B cell (primary cell): ENCODE measurements at regions of chr2 and their contacts with region 1.

Region 1: GRCh38 chr2:196076778-196077568 is 8.3 kb upstream of the DNAH7 start:
- DNase-seq: no peak
- ATAC-seq: no peak
- H3K4me3 ChIP-seq: no peak overlapping the region
- H3K4me3 Mint-ChIP-seq: no peak overlapping the region
- H3K27ac ChIP-seq: no peak overlapping the region
- H3K27ac Mint-ChIP-seq: no peak overlapping the region
- H3K4me1 ChIP-seq: peaks cover 13 to 17% of the 10 kb centered on the region in 2 donors
- H3K4me1 Mint-ChIP-seq: peaks cover 21% of the 10 kb centered on the region
- H3K27me3 ChIP-seq: no peaks in the 10 kb centered on the region
- H3K27me3 Mint-ChIP-seq: no peaks in the 10 kb centered on the region
- CTCF ChIP-seq: no peak

Region 2: GRCh38 chr2:196101325-196101991 is 24.5 kb after region 1 on chr2:
- CTCF ChIA-PET with region 1: interaction called, 19 read pairs
- POLR2A ChIA-PET with region 1: no interaction called
- intact Hi-C with region 1: no loop called
- DNase-seq: peak; percentile 67
- ATAC-seq: peak; percentile 86
- H3K4me3 ChIP-seq: no peak overlapping the region
- H3K4me3 Mint-ChIP-seq: peak overlapping the region; percentile 64
- H3K27ac ChIP-seq: peak overlapping the region; percentile 49 to 66
- H3K27ac Mint-ChIP-seq: peak overlapping the region; percentile 79
- H3K4me1 ChIP-seq: peaks cover 48 to 49% of the 10 kb centered on the region in 2 donors
- H3K4me1 Mint-ChIP-seq: peaks cover 68% of the 10 kb centered on the region
- H3K27me3 ChIP-seq: no peaks in the 10 kb centered on the region
- H3K27me3 Mint-ChIP-seq: no peaks in the 10 kb centered on the region
- CTCF ChIP-seq: no peak

Region 3: GRCh38 chr2:196143730-196144131 is 66.8 kb after region 1 on chr2:
- CTCF ChIA-PET with region 1: interaction called, 12 read pairs
- POLR2A ChIA-PET with region 1: no interaction called
- intact Hi-C with region 1: no loop called
- DNase-seq: no peak
- ATAC-seq: no peak
- H3K4me3 ChIP-seq: no peak overlapping the region
- H3K4me3 Mint-ChIP-seq: no peak overlapping the region
- H3K27ac ChIP-seq: peak overlapping the region in 1 of 2 donors; percentile 58
- H3K27ac Mint-ChIP-seq: peak overlapping the region; percentile 57
- H3K4me1 ChIP-seq: peaks cover 20 to 28% of the 10 kb centered on the region in 2 donors
- H3K4me1 Mint-ChIP-seq: peaks cover 39% of the 10 kb centered on the region
- H3K27me3 ChIP-seq: no peaks in the 10 kb centered on the region
- H3K27me3 Mint-ChIP-seq: no peaks in the 10 kb centered on the region
- CTCF ChIP-seq: no peak

Region 4: GRCh38 chr2:196171248-196171871 is 94.4 kb after region 1 on chr2 and contains the start of gene STK17B:
- CTCF ChIA-PET with region 1: interaction called, 27 read pairs
- POLR2A ChIA-PET with region 1: interaction called, 4 read pairs
- intact Hi-C with region 1: loop called (anchors 2 kb)
- DNase-seq: peak; percentile 98
- ATAC-seq: peak; percentile 66
- H3K4me3 ChIP-seq: peak within 1 kb of the TSS; percentile 94 to 100 (median 98)
- H3K4me3 Mint-ChIP-seq: peak within 1 kb of the TSS; percentile 100
- H3K27ac ChIP-seq: peak within 1 kb of the TSS; percentile 93 to 99
- H3K27ac Mint-ChIP-seq: peak within 1 kb of the TSS; percentile 99
- H3K4me1 ChIP-seq: peaks cover 50 to 51% of the 10 kb centered on the region in 2 donors
- H3K4me1 Mint-ChIP-seq: peaks cover 56% of the 10 kb centered on the region
- H3K27me3 ChIP-seq: no peaks in the 10 kb centered on the region
- H3K27me3 Mint-ChIP-seq: no peaks in the 10 kb centered on the region
- CTCF ChIP-seq: no peak
- total RNA-seq, gene STK17B: 249 and 261 TPM in 2 replicates

Region 5: DNA sequence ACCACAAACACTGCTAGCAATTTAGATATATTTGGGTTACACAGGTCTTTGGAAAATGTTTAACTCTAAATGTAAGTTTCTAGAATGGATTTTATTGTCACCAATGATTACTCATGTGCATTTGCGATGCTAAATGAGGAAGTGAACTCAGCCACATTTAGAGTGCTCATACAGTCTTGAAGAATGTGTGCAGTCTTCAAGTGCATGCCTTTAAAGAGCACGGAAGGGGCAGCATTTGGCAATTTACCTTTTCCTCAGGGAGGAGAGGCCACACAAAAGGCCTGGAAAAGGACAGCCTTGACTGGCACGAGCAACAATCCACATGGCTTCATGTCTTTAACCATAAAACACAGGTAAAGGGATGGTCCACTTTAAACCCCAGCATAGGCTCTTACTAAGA is 172.9 kb after region 1 on chr2:
- CTCF ChIA-PET with region 1: interaction called, 13 read pairs
- POLR2A ChIA-PET with region 1: no interaction called
- intact Hi-C with region 1: no loop called
- DNase-seq: peak; percentile 68
- ATAC-seq: peak; percentile 89
- H3K4me3 ChIP-seq: peak overlapping the region in 1 of 5 experiments; percentile 26
- H3K4me3 Mint-ChIP-seq: peak overlapping the region; percentile 21
- H3K27ac ChIP-seq: peak overlapping the region; percentile 43 to 78
- H3K27ac Mint-ChIP-seq: peak overlapping the region; percentile 88
- H3K4me1 ChIP-seq: peaks cover 57 to 62% of the 10 kb centered on the region in 2 donors
- H3K4me1 Mint-ChIP-seq: peaks cover 73% of the 10 kb centered on the region
- H3K27me3 ChIP-seq: no peaks in the 10 kb centered on the region
- H3K27me3 Mint-ChIP-seq: no peaks in the 10 kb centered on the region
- CTCF ChIP-seq: no peak

Region 6: DNA sequence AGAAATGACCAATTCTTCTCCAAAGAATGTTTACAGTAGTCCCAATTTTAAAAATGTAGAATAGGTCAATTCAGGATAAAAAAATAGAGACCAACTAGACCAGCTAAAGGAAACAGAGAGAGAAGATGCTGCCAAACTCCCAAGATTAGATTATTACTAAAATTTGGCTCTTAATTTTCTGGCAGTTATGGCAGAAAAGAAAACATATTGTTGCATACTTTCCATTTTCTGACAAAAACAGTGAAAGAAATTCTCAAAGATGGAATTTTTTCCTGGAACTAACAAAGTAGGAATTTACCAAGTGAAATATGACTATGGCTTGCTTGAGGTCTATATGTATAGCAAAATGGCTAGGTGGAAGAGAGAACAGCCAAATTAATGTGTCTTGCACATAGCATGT is 232.7 kb after region 1 on chr2:
- CTCF ChIA-PET with region 1: interaction called, 22 read pairs
- POLR2A ChIA-PET with region 1: no interaction called
- intact Hi-C with region 1: no loop called
- DNase-seq: no peak
- ATAC-seq: no peak
- H3K4me3 ChIP-seq: no peak overlapping the region
- H3K4me3 Mint-ChIP-seq: no peak overlapping the region
- H3K27ac ChIP-seq: no peak overlapping the region
- H3K27ac Mint-ChIP-seq: no peak overlapping the region
- H3K4me1 ChIP-seq: no peaks in the 10 kb centered on the region
- H3K4me1 Mint-ChIP-seq: no peaks in the 10 kb centered on the region
- H3K27me3 ChIP-seq: no peaks in the 10 kb centered on the region
- H3K27me3 Mint-ChIP-seq: no peaks in the 10 kb centered on the region
- CTCF ChIP-seq: no peak

Region 7: GRCh38 chr2:196453613-196454047 is 376.7 kb after region 1 on chr2:
- CTCF ChIA-PET with region 1: interaction called, 81 read pairs
- POLR2A ChIA-PET with region 1: no interaction called
- intact Hi-C with region 1: loop called (anchors 1 kb)
- DNase-seq: peak; percentile 63
- ATAC-seq: peak; percentile 43
- H3K4me3 ChIP-seq: no peak overlapping the region
- H3K4me3 Mint-ChIP-seq: no peak overlapping the region
- H3K27ac ChIP-seq: no peak overlapping the region
- H3K27ac Mint-ChIP-seq: no peak overlapping the region
- H3K4me1 ChIP-seq: no peaks in the 10 kb centered on the region
- H3K4me1 Mint-ChIP-seq: no peaks in the 10 kb centered on the region
- H3K27me3 ChIP-seq: peaks cover 0 to 5% (median 0%) of the 10 kb centered on the region in 4 experiments
- H3K27me3 Mint-ChIP-seq: peaks cover 23% of the 10 kb centered on the region
- CTCF ChIP-seq: peak; percentile 52